Spleen (tissue), 13 donors: ENCODE measurements at regions of chr16 and their contacts with region 1.

Region 1: DNA sequence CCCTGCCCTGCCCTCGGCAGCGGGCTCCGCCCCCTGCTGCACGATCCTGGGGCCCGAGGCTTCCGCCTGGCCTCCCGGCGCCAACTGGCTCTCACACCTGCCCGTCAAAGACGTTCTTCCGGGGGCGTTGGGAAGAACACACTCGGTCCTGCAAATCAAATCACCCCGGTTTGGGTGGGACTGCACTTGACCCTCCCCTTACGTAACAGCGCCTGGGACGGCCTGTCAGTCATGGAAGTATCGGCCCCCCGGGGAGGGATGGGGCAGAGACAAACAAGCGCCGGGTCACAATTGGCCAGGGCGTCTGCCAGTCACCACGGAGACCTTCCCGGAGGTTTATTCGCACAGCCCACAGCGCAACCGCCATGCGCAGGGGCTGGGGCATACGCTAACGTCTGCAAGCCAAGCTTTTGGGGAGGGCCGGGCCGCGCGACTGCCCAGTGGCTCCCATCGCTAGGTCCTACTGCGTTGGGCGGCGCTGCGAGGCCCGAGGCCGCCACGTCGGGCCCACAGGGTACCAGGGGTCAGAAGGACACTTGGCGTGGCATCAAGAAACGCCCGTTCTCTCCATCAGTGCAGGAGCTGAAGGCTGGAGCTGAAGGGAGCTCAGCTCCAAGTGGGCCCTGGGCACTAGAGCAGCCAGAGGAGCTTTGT is 388 bp upstream of the AKTIP start:
- DNase-seq: peak; percentile 100
- H3K4me3 ChIP-seq: peak overlapping the region; percentile 69 to 100 (median 98)
- H3K27ac ChIP-seq: peak overlapping the region; percentile 87 to 98 (median 96)
- H3K4me1 ChIP-seq: peaks cover 12 to 50% (median 32%) of the 10 kb centered on the region in 6 donors
- H3K27me3 ChIP-seq: no peaks in the 10 kb centered on the region
- CTCF ChIP-seq: peak in 3 of 11 experiments; percentile 28 to 39 (median 33)
- POLR2A ChIP-seq: peak; percentile 22 to 96 (median 66)

Region 2: DNA sequence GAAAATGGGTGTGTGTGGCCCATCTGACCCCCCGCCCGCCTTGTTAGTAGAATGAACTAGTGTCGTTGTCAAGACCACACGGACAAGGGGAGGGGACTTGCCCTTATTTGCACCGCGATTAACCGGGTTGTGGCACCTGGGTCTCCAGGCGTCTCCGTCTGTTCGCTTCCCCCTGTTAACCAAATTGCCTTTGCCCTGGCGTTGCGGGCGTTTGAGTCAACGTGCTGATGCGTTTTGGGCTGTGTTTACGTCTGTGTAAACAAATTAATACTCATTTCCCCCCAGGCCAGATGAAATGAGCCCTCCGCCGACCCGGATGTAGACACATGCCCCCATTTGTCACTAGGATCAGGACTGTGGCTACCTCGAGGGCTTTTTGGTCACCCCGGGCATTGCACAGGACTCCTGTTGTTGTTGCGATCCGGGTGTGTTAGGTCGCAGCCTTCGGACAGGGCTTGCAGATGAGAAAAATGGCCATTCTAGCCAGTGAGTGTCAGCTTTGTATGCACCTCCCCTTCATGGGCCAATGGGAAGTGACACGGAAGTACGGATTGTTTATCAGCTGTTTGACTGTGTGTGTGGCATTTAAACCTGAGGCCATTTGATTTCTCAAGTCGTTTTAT is 68.2 kb before region 1 on chr16:
- intact Hi-C with region 1: loop called (anchors 10 kb)
- DNase-seq: no peak
- H3K4me3 ChIP-seq: peak overlapping the region; percentile 89 to 99 (median 94)
- H3K27ac ChIP-seq: peak overlapping the region; percentile 94 to 99 (median 98)
- H3K4me1 ChIP-seq: peaks cover 17 to 57% (median 39%) of the 10 kb centered on the region in 6 donors
- H3K27me3 ChIP-seq: no peaks in the 10 kb centered on the region
- CTCF ChIP-seq: no peak
- POLR2A ChIP-seq: peak in 2 of 3 donors; percentile 51 to 52